Naive thymus-derived CD8-positive, alpha-beta T cell (primary cell): ENCODE measurements at regions of chr21 and their contacts with region 1.

Region 1: GRCh38 chr21:42381334-42381984 is 14.4 kb downstream of the TMPRSS3 start:
- DNase-seq: peak in 5 of 10 donors; percentile 29 to 80 (median 36)
- ATAC-seq: peak; percentile 61 to 87
- H3K4me3 Mint-ChIP-seq: no peak overlapping the region
- H3K27ac Mint-ChIP-seq: no peak overlapping the region
- H3K4me1 Mint-ChIP-seq: peaks cover 17 to 38% (median 26%) of the 10 kb centered on the region in 4 donors
- H3K27me3 Mint-ChIP-seq: no peaks in the 10 kb centered on the region

Region 2: DNA sequence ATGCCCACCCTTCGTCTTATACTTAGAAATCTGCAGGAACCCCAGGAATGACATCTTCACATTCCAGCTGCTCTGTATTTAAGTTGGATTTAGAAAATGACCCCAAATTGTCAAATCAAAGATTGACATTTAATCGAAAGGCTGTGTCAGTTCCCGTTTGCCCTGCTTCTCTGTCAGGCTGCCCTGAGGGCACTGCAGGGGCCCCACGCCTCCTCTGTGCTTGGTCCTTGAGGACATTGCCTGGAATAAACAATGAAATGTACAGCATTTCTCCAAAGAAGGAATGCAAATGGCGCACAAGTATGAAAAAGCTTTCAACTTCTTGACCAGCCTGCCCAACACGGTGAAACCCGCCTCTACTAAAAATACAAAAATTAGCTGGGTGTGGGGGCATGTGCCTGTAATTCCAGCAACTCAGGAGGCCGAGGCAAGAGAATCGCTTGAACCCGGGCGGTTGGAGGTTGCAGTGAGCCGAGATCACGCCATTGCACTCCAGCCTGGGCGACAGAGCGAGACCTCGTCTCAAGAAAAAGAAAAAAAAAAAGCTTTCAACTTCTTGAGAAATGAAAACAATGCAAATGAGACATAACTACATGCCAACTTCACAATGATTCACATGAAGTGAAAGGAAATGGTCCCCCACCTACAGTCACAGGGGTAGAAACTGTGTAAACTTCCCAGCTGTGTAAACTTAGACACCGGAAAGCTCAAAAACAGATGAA is 11.4 kb after region 1 on chr21:
- POLR2A ChIA-PET with region 1: interaction called, 10 read pairs
- DNase-seq: peak in 5 of 10 donors; percentile 28 to 65 (median 40)
- ATAC-seq: peak; percentile 93 to 97
- H3K4me3 Mint-ChIP-seq: peak overlapping the region; percentile 47 to 75 (median 64)
- H3K27ac Mint-ChIP-seq: peak overlapping the region; percentile 40 to 90 (median 78)
- H3K4me1 Mint-ChIP-seq: peaks cover 19 to 66% (median 55%) of the 10 kb centered on the region in 4 donors
- H3K27me3 Mint-ChIP-seq: no peaks in the 10 kb centered on the region